ENCODE measurements at regions of chr11 and their contacts with region 1.

Region 1: GRCh38 chr11:108405706-108406105 is 61.6 kb downstream of the C11orf65 start:
- DNase-seq: no peak
- H3K4me3 ChIP-seq: no peak overlapping the region
- H3K27ac ChIP-seq: no peak overlapping the region
- H3K4me1 ChIP-seq: no peaks in the 10 kb centered on the region
- H3K27me3 ChIP-seq: no peaks in the 10 kb centered on the region
- CTCF ChIP-seq: no peak
- POLR2A ChIP-seq: no peak

Region 2: GRCh38 chr11:108432783-108433182 is 27.1 kb after region 1 on chr11:
- intact Hi-C with region 1: loop called (anchors 2 kb)
- DNase-seq: no peak
- H3K4me3 ChIP-seq: no peak overlapping the region
- H3K27ac ChIP-seq: no peak overlapping the region
- H3K4me1 ChIP-seq: no peaks in the 10 kb centered on the region
- H3K27me3 ChIP-seq: no peaks in the 10 kb centered on the region
- CTCF ChIP-seq: no peak
- POLR2A ChIP-seq: no peak